Kidney (tissue), 22 donors: ENCODE measurements at regions of chr1 and their contacts with region 1.

Region 1: GRCh38 chr1:64147759-64148158 is 55.7 kb upstream of the UBE2U start:
- DNase-seq: no peak
- H3K4me3 ChIP-seq: no peak overlapping the region
- H3K27ac ChIP-seq: no peak overlapping the region
- H3K4me1 ChIP-seq: no peaks in the 10 kb centered on the region
- H3K27me3 ChIP-seq: no peaks in the 10 kb centered on the region
- CTCF ChIP-seq: no peak

Region 2: DNA sequence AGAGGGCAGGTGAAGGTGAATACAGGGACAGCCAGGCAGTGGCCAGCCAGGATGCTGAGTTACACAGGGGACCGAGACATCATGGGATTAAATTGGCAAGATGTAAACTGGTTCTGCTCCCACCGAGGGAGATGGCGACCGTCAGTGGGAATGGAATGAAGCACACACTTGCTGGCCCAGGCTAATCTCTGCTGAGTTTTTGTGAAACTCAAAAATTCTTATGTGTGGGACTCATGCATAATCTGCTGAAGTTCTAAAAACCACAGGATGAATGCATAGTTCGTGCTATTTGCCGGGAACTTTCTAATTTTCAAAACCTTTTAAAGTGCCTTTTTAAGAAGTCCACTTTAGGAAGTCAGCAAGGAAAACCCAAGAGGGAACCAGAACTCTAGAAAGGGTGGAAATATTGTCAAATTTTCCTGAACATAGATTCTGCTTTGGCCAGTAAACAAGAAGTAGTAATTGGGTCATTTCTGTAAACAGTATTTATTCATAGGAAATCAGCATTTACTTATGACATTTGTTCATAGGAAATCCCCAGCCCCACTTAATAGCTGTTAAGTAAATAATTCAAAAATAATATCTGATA is 459.4 kb before region 1 on chr1:
- intact Hi-C with region 1: loop called (anchors 10 kb)
- DNase-seq: no peak
- H3K4me3 ChIP-seq: no peak overlapping the region
- H3K27ac ChIP-seq: no peak overlapping the region
- H3K4me1 ChIP-seq: no peaks in the 10 kb centered on the region
- H3K27me3 ChIP-seq: no peaks in the 10 kb centered on the region
- CTCF ChIP-seq: no peak

Region 3: DNA sequence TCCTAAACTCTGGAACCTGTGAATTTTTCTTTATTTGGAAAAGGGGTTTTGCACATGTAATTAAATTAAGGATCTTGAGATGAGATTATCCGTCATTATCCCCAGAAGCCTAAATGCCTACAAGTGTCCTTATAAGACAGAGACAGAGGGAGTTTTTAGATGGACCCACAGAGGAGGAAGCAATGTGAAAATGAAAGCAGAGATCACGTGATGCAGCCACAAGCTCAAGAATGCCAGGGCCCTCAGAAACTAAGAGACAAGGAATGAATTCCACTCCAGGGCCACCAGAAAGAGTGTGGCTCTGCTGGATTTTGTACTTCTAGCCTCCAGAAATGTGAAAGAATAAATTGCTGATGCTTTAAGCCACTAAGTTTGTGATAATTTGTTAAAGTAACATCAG is 127.9 kb before region 1 on chr1:
- intact Hi-C with region 1: no loop called
- DNase-seq: peak in 1 of 5 donors; percentile 42
- H3K4me3 ChIP-seq: peak overlapping the region in 2 of 3 donors; percentile 5 to 27
- H3K27ac ChIP-seq: no peak overlapping the region
- H3K4me1 ChIP-seq: peaks cover 0 to 2% (median 0%) of the 10 kb centered on the region in 3 donors
- H3K27me3 ChIP-seq: no peaks in the 10 kb centered on the region
- CTCF ChIP-seq: no peak